Activated CD8-positive, alpha-beta T cell treated with anti-CD3 and anti-CD28 coated beads, Interleukin-2, amount 10 ng/mL, durations not matched to agents 7 days and 5 days (primary cell): ENCODE measurements at regions of chr18 and their contacts with region 1.

Region 1: GRCh38 chr18:63155169-63155852 is 164.3 kb downstream of the BCL2 start:
- DNase-seq: peak; percentile 87
- ATAC-seq: peak; percentile 78
- H3K4me3 Mint-ChIP-seq: peak overlapping the region; percentile 78
- H3K27ac Mint-ChIP-seq: peak overlapping the region; percentile 93
- H3K4me1 Mint-ChIP-seq: peaks cover 98% of the 10 kb centered on the region
- H3K27me3 Mint-ChIP-seq: no peaks in the 10 kb centered on the region

Region 2: GRCh38 chr18:63131106-63131958 is 24.0 kb before region 1 on chr18:
- CTCF ChIA-PET with region 1: interaction called, 108 read pairs
- POLR2A ChIA-PET with region 1: interaction called, 4 read pairs
- DNase-seq: peak; percentile 73
- ATAC-seq: peak; percentile 56
- H3K4me3 Mint-ChIP-seq: no peak overlapping the region
- H3K27ac Mint-ChIP-seq: peak overlapping the region; percentile 70
- H3K4me1 Mint-ChIP-seq: peaks cover 52% of the 10 kb centered on the region
- H3K27me3 Mint-ChIP-seq: no peaks in the 10 kb centered on the region

Region 3: GRCh38 chr18:63199743-63200241 is 44.5 kb after region 1 on chr18:
- CTCF ChIA-PET with region 1: interaction called, 27 read pairs
- POLR2A ChIA-PET with region 1: interaction called, 68 read pairs
- DNase-seq: peak; percentile 78
- ATAC-seq: peak; percentile 80
- H3K4me3 Mint-ChIP-seq: no peak overlapping the region
- H3K27ac Mint-ChIP-seq: no peak overlapping the region
- H3K4me1 Mint-ChIP-seq: peaks cover 49% of the 10 kb centered on the region
- H3K27me3 Mint-ChIP-seq: no peaks in the 10 kb centered on the region

Region 4: DNA sequence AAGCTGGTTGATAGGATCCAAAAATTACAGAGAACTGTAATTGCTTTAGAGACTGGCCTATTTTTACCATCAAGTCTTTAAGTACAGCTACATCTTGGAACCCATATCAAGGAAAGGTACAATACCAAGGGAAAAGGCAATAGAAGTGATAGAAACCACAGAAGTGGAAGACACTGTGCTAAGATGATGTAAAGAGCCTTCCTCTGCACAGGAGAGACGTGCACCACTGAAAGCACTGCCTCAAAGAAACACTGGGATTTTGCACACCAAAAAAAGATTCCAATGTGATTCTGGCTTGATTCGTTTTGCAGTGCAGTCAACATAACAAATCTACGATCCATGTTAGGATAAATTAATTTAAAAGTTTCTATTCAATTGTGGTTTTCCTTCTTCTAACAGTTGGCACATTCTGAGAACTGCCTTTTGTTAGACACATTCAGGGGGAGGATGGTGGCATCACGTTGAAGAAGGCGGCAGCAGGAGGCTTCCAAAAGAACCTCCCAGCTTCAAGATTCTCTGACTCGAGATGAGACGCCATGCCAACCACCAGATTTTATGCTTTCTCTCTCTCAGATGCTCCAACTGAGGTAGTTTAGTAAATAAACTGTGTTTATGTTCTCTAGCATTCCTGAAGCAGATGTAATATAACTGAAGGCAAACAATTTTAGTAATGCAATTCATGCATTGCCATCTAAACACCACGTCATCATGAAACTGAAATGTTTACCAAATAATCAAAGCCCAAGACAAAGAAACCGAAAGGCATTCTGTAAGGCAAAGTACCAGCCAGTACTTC is 61.4 kb after region 1 on chr18:
- CTCF ChIA-PET with region 1: interaction called, 4 read pairs
- POLR2A ChIA-PET with region 1: interaction called, 15 read pairs
- DNase-seq: peak; percentile 56
- ATAC-seq: peak; percentile 42
- H3K4me3 Mint-ChIP-seq: peak overlapping the region; percentile 72
- H3K27ac Mint-ChIP-seq: peak overlapping the region; percentile 90
- H3K4me1 Mint-ChIP-seq: peaks cover 98% of the 10 kb centered on the region
- H3K27me3 Mint-ChIP-seq: no peaks in the 10 kb centered on the region